MCF 10A (cell line): ENCODE measurements at regions of chr14 and their contacts with region 1.

Region 1: DNA sequence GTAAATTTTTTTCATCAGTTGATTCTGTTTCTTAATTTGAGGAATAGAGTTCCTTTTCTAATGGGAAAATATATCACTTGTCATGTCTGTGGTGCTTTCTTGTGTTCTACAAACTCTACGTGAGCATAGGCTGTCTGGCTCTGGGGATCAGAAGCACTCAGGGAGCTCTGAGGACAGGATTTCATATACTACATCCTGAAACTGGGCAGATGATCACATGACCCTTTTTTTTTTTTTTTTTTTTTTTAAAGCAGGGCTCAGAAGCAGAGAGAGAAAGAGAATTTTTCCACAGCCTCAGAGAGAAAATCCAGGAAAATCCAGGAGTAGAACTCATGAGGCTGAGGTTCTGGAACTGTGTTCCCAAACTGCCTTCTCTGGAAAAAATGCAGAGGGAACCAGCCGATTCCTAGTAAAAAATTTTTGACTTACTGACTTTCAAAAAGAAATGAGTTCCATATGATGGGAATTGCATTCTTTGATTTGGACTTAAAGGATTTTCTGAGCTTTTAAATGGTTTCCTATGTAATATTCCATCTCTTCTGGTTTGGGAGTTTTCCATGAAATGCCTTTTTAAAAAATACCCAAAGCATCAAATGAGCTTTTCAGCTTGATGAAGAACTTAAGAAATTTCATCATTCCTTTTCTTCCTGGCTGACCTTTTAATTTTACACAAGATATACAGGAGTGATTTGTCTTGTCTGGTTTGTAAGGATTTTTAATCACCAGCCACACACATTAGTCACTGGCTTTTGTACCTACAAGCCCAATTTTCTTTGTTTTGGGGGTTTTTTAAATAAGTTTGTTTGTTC is 183.1 kb upstream of the HIF1A start:
- DNase-seq: peak; percentile 83
- H3K4me3 Mint-ChIP-seq: peak overlapping the region; percentile 38
- H3K27ac Mint-ChIP-seq: peak overlapping the region; percentile 61
- H3K4me1 Mint-ChIP-seq: peaks cover 19% of the 10 kb centered on the region
- H3K27me3 Mint-ChIP-seq: no peaks in the 10 kb centered on the region
- CTCF ChIP-seq: no peak

Region 2: DNA sequence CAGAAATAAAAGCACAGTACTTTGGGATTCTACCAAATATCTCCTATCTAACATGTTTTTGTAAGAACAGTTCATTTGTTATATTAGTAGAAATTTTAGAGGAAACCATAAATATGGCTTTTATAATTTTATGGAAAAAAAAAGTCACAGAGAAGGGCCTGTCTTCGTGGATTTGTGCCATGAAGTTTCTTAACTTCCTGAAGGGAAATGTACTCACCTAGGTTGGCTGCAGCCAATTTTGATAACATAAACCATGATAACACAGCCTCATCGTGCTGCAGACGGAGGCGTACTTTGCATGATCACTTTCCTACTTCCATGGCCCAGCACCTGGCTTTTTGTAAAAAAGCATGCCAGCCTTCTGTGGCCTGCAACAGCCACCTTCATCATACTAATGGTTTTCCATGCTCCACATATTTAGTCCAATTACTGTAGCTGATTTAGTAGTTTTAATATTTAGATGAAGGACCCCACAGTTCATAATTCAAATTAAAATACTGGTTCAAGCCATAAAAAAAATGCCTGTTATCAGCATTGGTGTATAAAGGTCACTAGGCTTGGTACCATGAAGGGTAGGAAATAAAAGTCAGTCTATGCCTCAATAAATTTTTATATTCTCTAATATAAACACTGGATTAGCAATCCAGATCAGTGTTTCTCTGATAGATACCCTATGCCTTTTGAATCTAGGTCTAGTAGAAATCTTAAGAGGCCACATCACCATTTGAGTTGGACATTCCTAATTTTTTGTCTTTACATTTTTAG is 19.7 kb after region 1 on chr14:
- CTCF ChIA-PET with region 1: no interaction called
- POLR2A ChIA-PET with region 1: interaction called, 108 read pairs
- intact Hi-C with region 1: no loop called
- DNase-seq: no peak
- H3K4me3 Mint-ChIP-seq: no peak overlapping the region
- H3K27ac Mint-ChIP-seq: no peak overlapping the region
- H3K4me1 Mint-ChIP-seq: peaks cover 52% of the 10 kb centered on the region
- H3K27me3 Mint-ChIP-seq: no peaks in the 10 kb centered on the region
- CTCF ChIP-seq: no peak

Region 3: GRCh38 chr14:61537563-61538463 is 25.6 kb after region 1 on chr14:
- CTCF ChIA-PET with region 1: no interaction called
- POLR2A ChIA-PET with region 1: interaction called, 12 read pairs
- intact Hi-C with region 1: no loop called
- DNase-seq: peak; percentile 97
- H3K4me3 Mint-ChIP-seq: peak overlapping the region; percentile 10
- H3K27ac Mint-ChIP-seq: peak overlapping the region; percentile 88
- H3K4me1 Mint-ChIP-seq: peaks cover 32% of the 10 kb centered on the region
- H3K27me3 Mint-ChIP-seq: no peaks in the 10 kb centered on the region
- CTCF ChIP-seq: no peak